HCT116 (cell line): ENCODE measurements at regions of chr20 and their contacts with region 1.

Region 1: GRCh38 chr20:61724376-61724775 is 341.3 kb downstream of the TAF4 start:
- DNase-seq: no peak
- ATAC-seq: peak; percentile 76
- H3K4me3 ChIP-seq: no peak overlapping the region
- H3K27ac ChIP-seq: no peak overlapping the region
- H3K4me1 ChIP-seq: no peaks in the 10 kb centered on the region
- H3K27me3 ChIP-seq: peaks cover 29% of the 10 kb centered on the region
- CTCF ChIP-seq: peak; percentile 10 to 55 (median 53); a peak in 5 of 6 replicates
- POLR2A ChIP-seq: no peak
- RAD21 ChIP-seq: peak; percentile 23; the same call in 1 of the 2 replicates

Region 2: GRCh38 chr20:61253264-61253639 is 471.1 kb before region 1 on chr20:
- CTCF ChIA-PET with region 1: no interaction called
- POLR2A ChIA-PET with region 1: no interaction called
- RAD21 ChIA-PET with region 1: no interaction called
- intact Hi-C with region 1: no loop called
- DNase-seq: no peak
- ATAC-seq: no peak
- H3K4me3 ChIP-seq: no peak overlapping the region
- H3K27ac ChIP-seq: no peak overlapping the region
- H3K4me1 ChIP-seq: no peaks in the 10 kb centered on the region
- H3K27me3 ChIP-seq: no peaks in the 10 kb centered on the region
- CTCF ChIP-seq: no peak
- POLR2A ChIP-seq: no peak
- RAD21 ChIP-seq: no peak

Region 3: GRCh38 chr20:61874501-61875026 is 150.2 kb after region 1 on chr20:
- CTCF ChIA-PET with region 1: interaction called, 3 read pairs
- POLR2A ChIA-PET with region 1: no interaction called
- RAD21 ChIA-PET with region 1: no interaction called
- intact Hi-C with region 1: loop called (anchors 1 kb)
- DNase-seq: peak; percentile 32
- ATAC-seq: peak; percentile 91
- H3K4me3 ChIP-seq: no peak overlapping the region
- H3K27ac ChIP-seq: no peak overlapping the region
- H3K4me1 ChIP-seq: no peaks in the 10 kb centered on the region
- H3K27me3 ChIP-seq: no peaks in the 10 kb centered on the region; the same call in 1 of the 2 replicates
- CTCF ChIP-seq: peak; percentile 41 to 60 (median 59); a peak in 5 of 6 replicates
- POLR2A ChIP-seq: no peak
- RAD21 ChIP-seq: peak; percentile 67